ENCODE measurements at regions of chr5 and their contacts with region 1.

Region 1: GRCh38 chr5:40879163-40879942 is 29.9 kb upstream of the C7 start:
- DNase-seq: no peak
- ATAC-seq: no peak
- H3K4me3 ChIP-seq: no peak overlapping the region
- H3K27ac ChIP-seq: no peak overlapping the region
- H3K4me1 ChIP-seq: peaks cover 0 to 4% (median 0%) of the 10 kb centered on the region in 12 donors
- H3K27me3 ChIP-seq: no peaks in the 10 kb centered on the region
- CTCF ChIP-seq: peak; percentile 47 to 72 (median 64)
- POLR2A ChIP-seq: no peak

Region 2: GRCh38 chr5:39570403-39571027 is 1308.8 kb before region 1 on chr5:
- intact Hi-C with region 1: loop called in 3 of 10 experiments (anchors 5 to 10 kb)
- DNase-seq: no peak
- ATAC-seq: no peak
- H3K4me3 ChIP-seq: no peak overlapping the region
- H3K27ac ChIP-seq: no peak overlapping the region
- H3K4me1 ChIP-seq: peaks cover 0 to 8% (median 0%) of the 10 kb centered on the region in 12 donors
- H3K27me3 ChIP-seq: peaks cover 0 to 8% (median 0%) of the 10 kb centered on the region in 9 donors
- CTCF ChIP-seq: peak; percentile 46 to 80 (median 67)
- POLR2A ChIP-seq: no peak

Region 3: GRCh38 chr5:39714036-39714698 is 1165.2 kb before region 1 on chr5:
- intact Hi-C with region 1: loop called in 4 of 10 experiments (anchors 5 to 10 kb)
- DNase-seq: peak in 1 of 5 donors; percentile 14
- ATAC-seq: peak in 1 of 4 donors; percentile 53
- H3K4me3 ChIP-seq: no peak overlapping the region
- H3K27ac ChIP-seq: peak overlapping the region in 2 of 12 donors; percentile 6 to 25
- H3K4me1 ChIP-seq: peaks cover 0 to 8% (median 0%) of the 10 kb centered on the region in 12 donors
- H3K27me3 ChIP-seq: no peaks in the 10 kb centered on the region
- CTCF ChIP-seq: peak; percentile 35 to 67 (median 56)
- POLR2A ChIP-seq: no peak

Region 4: DNA sequence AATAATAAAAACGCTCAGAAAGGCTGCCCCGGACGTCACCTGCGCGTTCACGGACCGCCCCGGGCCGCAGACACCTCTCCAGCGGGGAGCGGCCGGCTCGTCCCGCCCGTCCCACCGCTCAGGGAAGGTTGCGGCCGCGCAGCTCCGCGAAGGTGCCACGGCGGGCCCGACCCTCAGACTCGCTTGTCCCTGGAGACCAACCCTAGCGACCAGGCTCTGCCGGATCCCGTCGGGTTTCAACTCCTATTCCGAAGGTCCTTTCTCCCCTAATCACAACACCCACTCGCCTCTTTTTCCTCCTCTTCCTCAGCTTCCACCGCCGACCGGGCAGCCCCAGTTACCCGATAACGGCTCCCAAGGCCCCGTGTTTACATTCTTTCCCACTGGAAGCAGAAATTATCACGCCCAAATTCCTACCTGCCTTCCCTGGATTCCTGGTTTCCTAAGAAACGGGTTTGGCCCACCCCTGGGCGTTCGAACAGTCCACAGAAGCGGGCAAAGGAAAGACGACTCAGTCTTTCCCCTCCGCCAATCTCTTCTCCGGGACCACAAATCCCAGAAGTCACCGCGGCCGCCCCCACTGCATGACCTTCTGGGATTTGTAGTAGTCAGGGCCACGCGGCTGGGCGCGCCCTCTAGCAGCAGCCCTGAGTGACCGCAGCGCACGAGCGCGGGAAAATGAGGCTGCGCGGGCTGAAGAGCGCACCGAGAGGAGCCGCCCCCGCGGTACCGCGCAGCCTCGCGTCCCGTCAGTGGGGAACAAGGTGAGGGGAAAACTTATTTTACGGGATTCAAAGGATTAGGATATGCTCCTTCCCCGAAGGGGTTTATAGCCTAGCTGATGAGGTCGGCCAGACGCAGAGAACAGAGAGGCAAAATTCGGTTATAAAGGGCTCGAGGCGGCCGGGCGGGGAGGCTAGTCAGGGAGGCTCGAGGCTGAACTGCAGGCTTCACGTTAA is 123.7 kb before region 1 on chr5 and contains the start of gene TTC33:
- intact Hi-C with region 1: loop called in 9 of 10 experiments (anchors 1 to 10 kb)
- DNase-seq: peak; percentile 95 to 97 (median 96)
- ATAC-seq: peak; percentile 98 to 99 (median 99)
- H3K4me3 ChIP-seq: peak within 1 kb of the TSS; percentile 57 to 98 (median 84)
- H3K27ac ChIP-seq: peak within 1 kb of the TSS; percentile 49 to 95 (median 90)
- H3K4me1 ChIP-seq: peaks cover 0 to 20% (median 11%) of the 10 kb centered on the region in 12 donors
- H3K27me3 ChIP-seq: no peaks in the 10 kb centered on the region
- CTCF ChIP-seq: peak; percentile 43 to 88 (median 75)
- POLR2A ChIP-seq: peak in 1 of 2 donors; percentile 59
- total RNA-seq, gene TTC33: 11.3 to 20.0 (median 14.2) TPM

Region 5: DNA sequence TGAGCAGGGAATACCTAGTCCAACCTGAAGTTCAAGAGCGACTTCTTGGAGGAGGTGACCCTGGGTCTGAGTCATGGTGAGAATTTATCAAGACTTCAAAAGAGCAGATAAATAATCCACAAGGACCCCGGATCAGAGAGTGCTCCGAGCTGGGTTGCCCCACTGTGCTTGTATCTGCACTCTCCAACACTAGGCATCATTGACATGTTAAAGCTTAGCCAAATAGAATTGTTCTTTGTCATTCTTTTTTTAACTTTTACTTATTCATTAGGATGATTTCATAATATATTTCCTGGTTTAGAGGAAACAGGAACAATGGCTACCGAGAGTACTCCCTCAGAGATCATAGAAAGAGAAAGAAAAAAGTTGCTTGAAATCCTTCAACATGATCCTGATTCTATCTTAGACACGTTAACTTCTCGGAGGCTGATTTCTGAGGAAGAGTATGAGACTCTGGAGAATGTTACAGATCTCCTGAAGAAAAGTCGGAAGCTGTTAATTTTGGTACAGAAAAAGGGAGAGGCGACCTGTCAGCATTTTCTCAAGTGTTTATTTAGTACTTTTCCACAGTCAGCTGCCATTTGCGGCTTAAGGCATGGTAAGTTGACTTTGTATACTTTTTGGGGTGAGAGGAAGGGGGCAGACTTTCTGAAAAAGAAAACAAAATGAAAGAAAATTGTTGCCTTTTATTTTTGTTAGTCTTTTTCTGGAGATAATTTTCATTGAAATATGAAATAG is 38.1 kb before region 1 on chr5 and contains the start of gene CARD6:
- intact Hi-C with region 1: loop called in 2 of 10 experiments (anchors 5 kb)
- DNase-seq: no peak
- ATAC-seq: peak; percentile 50 to 72 (median 56)
- H3K4me3 ChIP-seq: peak within 1 kb of the TSS; percentile 15 to 63 (median 50)
- H3K27ac ChIP-seq: peak within 1 kb of the TSS; percentile 47 to 93 (median 78)
- H3K4me1 ChIP-seq: peaks cover 0 to 38% (median 5%) of the 10 kb centered on the region in 12 donors
- H3K27me3 ChIP-seq: no peaks in the 10 kb centered on the region
- CTCF ChIP-seq: peak in 1 of 12 donors; percentile 12
- POLR2A ChIP-seq: peak in 1 of 2 donors; percentile 16
- total RNA-seq, gene CARD6: 5.2 to 13.0 (median 6.1) TPM

Region 6: GRCh38 chr5:41156739-41157138 is 277.4 kb after region 1 on chr5:
- intact Hi-C with region 1: no loop called
- DNase-seq: no peak
- ATAC-seq: peak in 1 of 4 donors; percentile 51
- H3K4me3 ChIP-seq: no peak overlapping the region
- H3K27ac ChIP-seq: no peak overlapping the region
- H3K4me1 ChIP-seq: no peaks in the 10 kb centered on the region
- H3K27me3 ChIP-seq: no peaks in the 10 kb centered on the region
- CTCF ChIP-seq: no peak
- POLR2A ChIP-seq: no peak

Measured in heart left ventricle (tissue), 16 donors.